CD8-positive, alpha-beta T cell (primary cell): ENCODE measurements at regions of chr18 and their contacts with region 1.

Region 1: DNA sequence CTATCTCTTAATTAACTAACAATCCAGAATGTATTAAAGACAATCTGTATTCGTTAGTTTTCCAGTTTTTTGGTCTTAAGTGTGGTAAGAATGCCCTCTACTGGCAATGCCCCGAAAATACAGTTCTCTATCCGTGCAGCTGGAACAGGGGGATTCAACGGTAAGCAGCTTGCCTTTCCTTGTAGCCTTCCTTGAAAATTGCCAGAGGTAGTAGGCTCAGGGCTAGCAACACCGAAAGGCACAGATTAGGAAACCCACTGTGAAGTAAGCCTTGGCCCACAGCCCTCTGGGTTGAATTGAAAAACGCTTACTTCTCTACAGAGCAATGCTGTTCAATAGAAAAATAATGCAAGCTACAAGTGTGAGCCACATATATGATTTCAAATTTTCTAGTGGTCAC is 17.1 kb upstream of the VPS4B start:
- DNase-seq: peak; percentile 3 to 75 (median 48)
- ATAC-seq: peak; percentile 84
- H3K4me3 ChIP-seq: no peak overlapping the region
- H3K4me3 Mint-ChIP-seq: no peak overlapping the region
- H3K27ac ChIP-seq: no peak overlapping the region
- H3K27ac Mint-ChIP-seq: no peak overlapping the region
- H3K4me1 ChIP-seq: no peaks in the 10 kb centered on the region
- H3K4me1 Mint-ChIP-seq: no peaks in the 10 kb centered on the region
- H3K27me3 ChIP-seq: no peaks in the 10 kb centered on the region
- H3K27me3 Mint-ChIP-seq: peaks cover 10% of the 10 kb centered on the region
- CTCF ChIP-seq: peak; percentile 94

Region 2: GRCh38 chr18:63016270-63016669 is 423.1 kb before region 1 on chr18:
- CTCF ChIA-PET with region 1: interaction called, 167 read pairs
- POLR2A ChIA-PET with region 1: interaction called, 3 read pairs
- intact Hi-C with region 1: loop called (anchors 1 kb)
- DNase-seq: peak; percentile 11 to 79 (median 51)
- ATAC-seq: peak; percentile 77
- H3K4me3 ChIP-seq: no peak overlapping the region
- H3K4me3 Mint-ChIP-seq: no peak overlapping the region
- H3K27ac ChIP-seq: no peak overlapping the region
- H3K27ac Mint-ChIP-seq: no peak overlapping the region
- H3K4me1 ChIP-seq: no peaks in the 10 kb centered on the region
- H3K4me1 Mint-ChIP-seq: no peaks in the 10 kb centered on the region
- H3K27me3 ChIP-seq: no peaks in the 10 kb centered on the region
- H3K27me3 Mint-ChIP-seq: peaks cover 16% of the 10 kb centered on the region
- CTCF ChIP-seq: peak; percentile 90

Region 3: DNA sequence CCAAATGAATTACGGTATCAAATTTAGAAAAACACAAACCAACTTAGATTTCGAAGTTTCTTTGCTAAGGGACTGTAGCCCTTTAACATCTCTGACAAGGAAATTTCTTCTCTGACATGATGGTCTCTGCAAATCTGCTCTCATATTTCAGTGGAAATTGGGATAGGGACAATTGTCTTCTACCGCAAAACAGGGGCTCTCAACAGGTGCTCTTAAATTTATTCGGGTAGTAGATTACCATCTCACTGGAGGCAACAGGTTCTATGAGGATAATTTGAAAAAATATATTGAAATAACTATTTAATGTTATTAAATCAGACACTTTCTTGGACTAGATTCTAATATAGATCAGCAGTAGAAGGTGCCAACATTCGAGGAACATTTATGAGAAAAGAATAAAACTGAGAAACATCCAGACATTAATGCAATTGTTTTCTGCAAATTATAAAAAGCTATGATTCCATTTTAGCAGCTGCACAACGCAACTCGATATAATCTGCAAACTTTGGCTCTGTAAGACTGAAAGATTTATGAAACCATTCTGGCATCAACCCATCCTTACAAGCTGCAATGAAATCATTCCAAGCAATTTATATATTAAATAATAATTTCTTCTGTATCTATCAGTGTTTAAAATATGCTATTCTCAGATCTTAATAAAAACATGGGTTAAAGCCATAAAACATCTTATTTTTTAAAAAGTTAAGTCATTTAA is 109.7 kb before region 1 on chr18:
- CTCF ChIA-PET with region 1: interaction called, 17 read pairs
- POLR2A ChIA-PET with region 1: no interaction called
- intact Hi-C with region 1: loop called in 1 of 2 experiments (anchors 5 kb)
- DNase-seq: no peak
- ATAC-seq: no peak
- H3K4me3 ChIP-seq: no peak overlapping the region
- H3K4me3 Mint-ChIP-seq: no peak overlapping the region
- H3K27ac ChIP-seq: no peak overlapping the region
- H3K27ac Mint-ChIP-seq: no peak overlapping the region
- H3K4me1 ChIP-seq: no peaks in the 10 kb centered on the region
- H3K4me1 Mint-ChIP-seq: no peaks in the 10 kb centered on the region
- H3K27me3 ChIP-seq: no peaks in the 10 kb centered on the region
- H3K27me3 Mint-ChIP-seq: no peaks in the 10 kb centered on the region
- CTCF ChIP-seq: no peak

Region 4: DNA sequence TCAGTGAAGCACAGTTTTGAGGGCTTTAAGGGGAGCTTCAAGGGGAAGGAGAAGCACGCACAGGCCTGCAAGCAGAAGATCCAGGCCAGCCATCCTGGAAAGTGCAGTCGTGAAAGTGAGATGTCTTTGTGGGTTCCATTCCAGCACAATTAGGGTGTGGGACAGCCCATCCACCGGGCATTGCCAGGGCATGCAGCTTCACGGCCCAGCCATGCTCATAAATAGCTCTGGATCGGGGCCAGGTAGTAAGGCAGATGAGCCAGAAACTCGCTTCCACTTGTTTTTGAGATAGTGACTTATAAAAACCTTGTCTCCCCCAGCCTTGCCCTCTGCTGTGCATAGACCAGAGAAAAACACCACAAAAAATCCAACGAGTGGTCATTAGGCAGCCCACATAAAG is 93.3 kb before region 1 on chr18:
- CTCF ChIA-PET with region 1: interaction called, 52 read pairs
- POLR2A ChIA-PET with region 1: no interaction called
- intact Hi-C with region 1: loop called in 1 of 2 experiments (anchors 1 kb)
- DNase-seq: no peak
- ATAC-seq: no peak
- H3K4me3 ChIP-seq: no peak overlapping the region
- H3K4me3 Mint-ChIP-seq: no peak overlapping the region
- H3K27ac ChIP-seq: no peak overlapping the region
- H3K27ac Mint-ChIP-seq: no peak overlapping the region
- H3K4me1 ChIP-seq: no peaks in the 10 kb centered on the region
- H3K4me1 Mint-ChIP-seq: no peaks in the 10 kb centered on the region
- H3K27me3 ChIP-seq: no peaks in the 10 kb centered on the region
- H3K27me3 Mint-ChIP-seq: no peaks in the 10 kb centered on the region
- CTCF ChIP-seq: no peak

Region 5: GRCh38 chr18:64137914-64138313 is 698.6 kb after region 1 on chr18:
- CTCF ChIA-PET with region 1: no interaction called
- POLR2A ChIA-PET with region 1: no interaction called
- intact Hi-C with region 1: no loop called
- DNase-seq: no peak
- ATAC-seq: no peak
- H3K4me3 ChIP-seq: no peak overlapping the region
- H3K4me3 Mint-ChIP-seq: no peak overlapping the region
- H3K27ac ChIP-seq: no peak overlapping the region
- H3K27ac Mint-ChIP-seq: no peak overlapping the region
- H3K4me1 ChIP-seq: no peaks in the 10 kb centered on the region
- H3K4me1 Mint-ChIP-seq: no peaks in the 10 kb centered on the region
- H3K27me3 ChIP-seq: no peaks in the 10 kb centered on the region
- H3K27me3 Mint-ChIP-seq: no peaks in the 10 kb centered on the region
- CTCF ChIP-seq: no peak